ENCODE measurements at regions of chr2 and their contacts with region 1.

Region 1: DNA sequence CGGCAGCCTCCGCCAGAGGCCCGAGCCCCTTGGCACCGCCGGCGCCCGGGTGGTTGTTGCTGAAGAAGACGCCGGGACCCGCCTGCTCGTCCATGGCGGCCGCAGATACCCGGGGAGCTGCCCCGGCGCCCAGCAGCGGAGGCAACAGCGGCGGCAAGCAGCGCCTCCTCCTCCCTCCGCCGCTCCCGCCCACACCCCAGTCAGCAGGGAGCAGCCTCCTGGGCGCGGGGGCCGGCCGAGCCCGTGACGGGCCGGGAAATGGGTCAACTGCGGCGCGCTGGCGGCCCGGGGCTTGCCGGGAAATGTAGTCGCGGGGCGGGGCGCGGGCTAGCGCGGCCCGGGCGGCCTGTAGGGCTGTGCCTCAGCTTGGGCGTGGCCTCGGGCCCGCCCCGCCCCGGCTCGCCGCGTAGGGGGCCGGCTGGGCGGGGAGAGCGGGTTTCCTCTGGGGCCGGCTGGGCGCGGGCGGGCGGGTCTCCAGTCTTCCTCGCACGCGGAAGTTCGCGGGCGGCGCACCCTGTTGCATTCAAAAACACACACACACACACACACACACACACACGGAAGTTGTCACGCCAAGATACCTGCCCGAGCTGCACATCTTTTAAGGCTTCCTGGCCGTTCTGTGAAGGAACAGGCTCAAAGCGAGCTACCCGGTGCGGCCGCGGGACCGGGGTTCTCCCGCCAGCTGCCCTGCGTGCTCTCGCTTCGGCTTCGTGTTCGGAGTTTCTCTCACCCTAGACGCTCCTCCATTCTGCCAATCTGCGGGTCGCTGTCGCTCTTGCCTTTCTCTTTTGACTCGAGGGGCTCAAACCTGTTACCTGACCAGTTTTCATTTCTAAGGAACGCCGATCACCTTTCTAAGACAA is at the start of gene STRN:
- DNase-seq: peak; percentile 98
- H3K4me3 Mint-ChIP-seq: peak within 1 kb of the TSS; percentile 96
- H3K27ac Mint-ChIP-seq: peak within 1 kb of the TSS; percentile 91
- H3K4me1 Mint-ChIP-seq: peaks cover 42% of the 10 kb centered on the region
- H3K27me3 Mint-ChIP-seq: no peaks in the 10 kb centered on the region
- total RNA-seq, gene STRN: 22.3 to 25.0 TPM

Region 2: GRCh38 chr2:36800381-36800780 is 166.2 kb before region 1 on chr2:
- CTCF ChIA-PET with region 1: no interaction called
- POLR2A ChIA-PET with region 1: no interaction called
- intact Hi-C with region 1: loop called (anchors 1 kb)
- DNase-seq: peak; percentile 87
- H3K4me3 Mint-ChIP-seq: peak overlapping the region; percentile 9
- H3K27ac Mint-ChIP-seq: peak overlapping the region; percentile 53
- H3K4me1 Mint-ChIP-seq: peaks cover 11% of the 10 kb centered on the region
- H3K27me3 Mint-ChIP-seq: peaks cover 33% of the 10 kb centered on the region

Region 3: GRCh38 chr2:36889795-36890194 is 76.8 kb before region 1 on chr2:
- CTCF ChIA-PET with region 1: no interaction called
- POLR2A ChIA-PET with region 1: no interaction called
- intact Hi-C with region 1: loop called (anchors 2 kb)
- DNase-seq: peak; percentile 24
- H3K4me3 Mint-ChIP-seq: peak overlapping the region; percentile 17
- H3K27ac Mint-ChIP-seq: peak overlapping the region; percentile 69
- H3K4me1 Mint-ChIP-seq: peaks cover 9% of the 10 kb centered on the region
- H3K27me3 Mint-ChIP-seq: no peaks in the 10 kb centered on the region

Region 4: DNA sequence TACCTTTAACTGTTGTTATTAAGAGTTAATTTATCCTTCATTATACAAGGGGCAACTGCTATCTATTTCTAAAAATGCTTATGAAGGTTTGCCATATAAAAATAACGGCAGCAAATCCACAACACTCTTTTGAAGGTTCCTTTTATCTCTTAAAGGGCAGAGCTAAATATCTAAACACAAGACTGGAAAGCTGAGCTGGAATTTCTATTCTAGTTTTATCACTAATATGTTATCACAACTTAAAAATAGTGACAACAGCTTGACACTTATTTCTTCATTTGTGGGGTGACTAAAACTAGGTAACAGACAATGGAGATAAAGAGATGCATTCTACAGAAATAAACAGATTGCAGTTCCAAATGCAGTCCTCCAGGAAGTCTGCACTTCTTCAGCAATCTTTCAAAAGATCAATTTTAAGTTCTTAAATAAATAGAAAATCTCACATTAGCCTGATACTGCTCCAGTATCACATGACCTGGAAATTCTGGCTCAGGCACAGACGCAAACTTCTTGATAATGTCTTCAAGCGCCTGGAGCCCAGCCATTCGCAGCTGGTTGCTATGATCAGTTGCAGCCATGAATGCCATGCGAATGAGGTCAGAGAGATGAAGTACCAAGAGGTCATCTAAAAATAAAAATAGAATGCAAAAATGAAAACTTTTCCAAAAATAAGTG is 53.7 kb after region 1 on chr2:
- CTCF ChIA-PET with region 1: no interaction called
- POLR2A ChIA-PET with region 1: no interaction called
- intact Hi-C with region 1: no loop called
- DNase-seq: no peak
- H3K4me3 Mint-ChIP-seq: no peak overlapping the region
- H3K27ac Mint-ChIP-seq: no peak overlapping the region
- H3K4me1 Mint-ChIP-seq: no peaks in the 10 kb centered on the region
- H3K27me3 Mint-ChIP-seq: no peaks in the 10 kb centered on the region

Region 5: DNA sequence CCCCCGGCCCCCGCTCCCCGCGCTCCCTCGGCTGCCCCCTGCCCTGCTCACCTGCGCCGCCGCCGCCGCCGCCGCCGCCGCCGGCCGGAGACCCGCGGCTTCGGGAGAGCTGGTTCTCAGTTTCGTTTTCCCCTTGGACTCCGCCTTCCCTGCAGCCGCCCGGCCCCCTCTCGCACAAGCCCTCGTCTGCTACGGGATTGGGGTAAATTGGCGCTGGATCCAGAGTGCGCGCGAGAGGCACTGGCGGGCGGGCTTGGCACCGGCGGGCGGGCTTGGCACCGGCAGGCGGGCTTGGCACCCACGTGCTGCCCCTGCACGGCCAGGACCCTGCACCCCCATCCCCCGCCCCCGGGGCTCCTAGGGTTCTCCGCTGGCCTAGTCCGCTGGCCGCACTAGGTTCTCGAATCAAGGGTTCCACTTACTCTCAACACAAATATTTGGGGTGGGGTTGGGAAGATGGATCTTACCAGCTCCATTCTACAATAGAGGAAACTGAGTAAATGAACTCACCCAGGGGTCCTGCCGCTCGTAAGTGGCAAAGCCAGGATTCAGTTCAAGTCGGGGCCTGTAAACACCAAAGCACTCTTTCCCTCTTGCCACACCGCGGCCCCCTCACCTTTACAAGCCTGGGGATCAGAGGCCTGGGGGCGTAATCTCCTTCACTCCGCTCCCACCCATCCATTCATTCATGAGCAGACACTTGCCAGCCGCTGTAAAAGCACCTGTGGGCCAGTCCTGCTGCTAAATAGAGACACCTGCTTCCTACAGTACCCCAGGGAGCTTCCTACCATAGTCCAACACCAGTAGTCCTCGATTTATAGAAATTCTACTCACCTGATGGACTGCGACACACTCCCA is 190.5 kb after region 1 on chr2 and contains the start of gene EIF2AK2:
- CTCF ChIA-PET with region 1: no interaction called
- POLR2A ChIA-PET with region 1: no interaction called
- intact Hi-C with region 1: loop called (anchors 5 kb)
- DNase-seq: peak; percentile 88
- H3K4me3 Mint-ChIP-seq: peak within 1 kb of the TSS; percentile 80
- H3K27ac Mint-ChIP-seq: peak within 1 kb of the TSS; percentile 74
- H3K4me1 Mint-ChIP-seq: peaks cover 34% of the 10 kb centered on the region
- H3K27me3 Mint-ChIP-seq: no peaks in the 10 kb centered on the region
- total RNA-seq, gene EIF2AK2: 48.1 to 52.6 TPM

Measured in activated CD4-positive, alpha-beta memory T cell treated with anti-CD3 and anti-CD28 coated beads for 36 hours (primary cell).